K562 (cell line): ENCODE measurements at regions of chr6 and their contacts with region 1.

Region 1: DNA sequence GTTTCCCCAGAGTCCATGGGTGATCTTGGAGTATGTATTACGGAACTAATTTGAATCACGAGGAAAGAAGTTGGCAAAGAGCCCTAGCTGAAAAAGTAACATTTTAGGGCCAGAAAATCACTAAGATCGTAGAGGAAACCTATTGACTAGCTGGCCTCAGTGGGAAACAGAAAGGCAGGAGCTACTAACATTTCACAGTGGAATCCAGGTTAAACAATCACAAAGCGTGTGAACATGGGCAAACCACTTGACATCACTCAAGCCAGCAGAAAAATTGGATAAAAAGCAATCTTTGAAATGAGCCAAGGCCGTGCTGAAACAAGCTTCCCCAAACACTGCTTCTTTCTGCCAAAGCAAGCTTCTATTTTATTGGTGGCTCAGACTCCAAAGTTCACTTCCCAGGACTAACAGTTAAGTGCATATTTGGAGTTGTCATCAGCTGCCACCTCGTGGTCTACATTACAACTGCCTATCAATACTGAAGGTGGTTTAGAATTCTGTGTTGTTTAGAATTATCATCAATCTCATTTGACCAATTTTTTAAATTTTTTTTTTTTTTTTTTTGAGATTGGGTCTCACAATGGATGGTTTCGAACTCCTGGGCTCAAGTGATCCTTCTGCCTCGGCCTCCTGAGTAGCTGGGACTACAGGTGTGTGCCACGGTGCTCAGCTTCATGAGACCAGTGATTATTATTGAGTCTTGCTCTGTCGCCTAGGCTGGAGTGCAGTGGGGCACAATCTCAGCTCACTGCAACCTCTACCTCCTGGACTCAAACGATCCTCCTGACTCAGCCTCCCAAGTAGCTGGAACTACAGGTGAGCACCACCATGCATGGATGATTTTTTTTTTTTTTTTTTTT is 10.6 kb downstream of the RPS10 start:
- DNase-seq: peak; percentile 50 to 82 (median 63)
- ATAC-seq: peak; percentile 85
- H3K4me3 ChIP-seq: no peak overlapping the region
- H3K27ac ChIP-seq: no peak overlapping the region; the same call in 2 of the 3 replicates
- H3K4me1 ChIP-seq: no peaks in the 10 kb centered on the region
- H3K27me3 ChIP-seq: no peaks in the 10 kb centered on the region
- CTCF ChIP-seq: peak; percentile 73 to 89 (median 78)
- EP300 ChIP-seq: no peak
- POLR2A ChIP-seq: no peak
- RAD21 ChIP-seq: peak; percentile 95 to 97

Region 2: DNA sequence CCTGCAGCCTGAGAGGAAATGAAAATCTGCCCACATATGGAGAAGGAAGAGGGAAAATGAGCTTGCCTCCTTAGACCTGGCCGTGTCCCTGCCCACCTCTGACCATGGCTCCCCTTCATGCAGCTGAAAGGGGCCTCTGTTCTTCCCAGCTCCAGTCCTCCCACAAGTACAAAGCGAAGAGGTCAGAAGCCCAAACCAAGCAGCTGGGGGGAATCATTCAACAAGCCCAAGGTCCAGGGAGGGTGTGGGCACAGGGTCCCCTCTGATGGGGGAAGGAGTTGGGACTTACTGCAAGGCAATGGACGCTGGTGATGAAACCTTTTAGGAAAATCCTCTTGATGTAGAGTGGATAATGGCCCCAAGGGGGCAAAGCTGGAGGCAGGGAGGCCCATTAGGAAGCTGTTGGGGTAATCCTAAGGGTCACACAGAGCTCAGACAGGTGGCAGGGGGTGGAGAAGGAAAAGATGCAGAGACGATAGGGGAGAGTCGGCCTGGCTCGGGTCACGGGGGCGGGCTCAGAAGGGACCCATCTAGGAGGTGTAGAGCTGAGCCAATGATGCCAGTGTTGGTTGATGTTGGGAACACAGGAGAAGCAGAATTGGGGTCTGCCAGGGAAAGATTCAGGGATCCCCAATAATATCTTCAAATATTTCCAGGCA is 253.2 kb before region 1 on chr6:
- CTCF ChIA-PET with region 1: interaction called, 4 read pairs
- POLR2A ChIA-PET with region 1: interaction called, 7 read pairs
- in situ Hi-C with region 1: loop called (anchors 5 kb)
- intact Hi-C with region 1: loop called (anchors 2 kb)
- DNase-seq: no peak
- ATAC-seq: no peak
- H3K4me3 ChIP-seq: no peak overlapping the region
- H3K27ac ChIP-seq: no peak overlapping the region
- H3K4me1 ChIP-seq: no peaks in the 10 kb centered on the region
- H3K27me3 ChIP-seq: peaks cover 8 to 20% of the 10 kb centered on the region in 2 experiments; a peak in 3 of 5 replicates
- CTCF ChIP-seq: no peak
- EP300 ChIP-seq: no peak
- POLR2A ChIP-seq: no peak
- RAD21 ChIP-seq: no peak

Region 3: GRCh38 chr6:34169897-34170296 is 245.3 kb before region 1 on chr6:
- CTCF ChIA-PET with region 1: interaction called, 3 read pairs
- POLR2A ChIA-PET with region 1: no interaction called
- in situ Hi-C with region 1: loop called (anchors 5 kb)
- intact Hi-C with region 1: loop called (anchors 2 kb)
- DNase-seq: no peak
- ATAC-seq: no peak
- H3K4me3 ChIP-seq: no peak overlapping the region
- H3K27ac ChIP-seq: no peak overlapping the region
- H3K4me1 ChIP-seq: no peaks in the 10 kb centered on the region
- H3K27me3 ChIP-seq: peaks cover 0 to 3% of the 10 kb centered on the region in 2 experiments; a peak in 1 of 5 replicates
- CTCF ChIP-seq: no peak
- EP300 ChIP-seq: no peak
- POLR2A ChIP-seq: no peak
- RAD21 ChIP-seq: no peak

Region 4: DNA sequence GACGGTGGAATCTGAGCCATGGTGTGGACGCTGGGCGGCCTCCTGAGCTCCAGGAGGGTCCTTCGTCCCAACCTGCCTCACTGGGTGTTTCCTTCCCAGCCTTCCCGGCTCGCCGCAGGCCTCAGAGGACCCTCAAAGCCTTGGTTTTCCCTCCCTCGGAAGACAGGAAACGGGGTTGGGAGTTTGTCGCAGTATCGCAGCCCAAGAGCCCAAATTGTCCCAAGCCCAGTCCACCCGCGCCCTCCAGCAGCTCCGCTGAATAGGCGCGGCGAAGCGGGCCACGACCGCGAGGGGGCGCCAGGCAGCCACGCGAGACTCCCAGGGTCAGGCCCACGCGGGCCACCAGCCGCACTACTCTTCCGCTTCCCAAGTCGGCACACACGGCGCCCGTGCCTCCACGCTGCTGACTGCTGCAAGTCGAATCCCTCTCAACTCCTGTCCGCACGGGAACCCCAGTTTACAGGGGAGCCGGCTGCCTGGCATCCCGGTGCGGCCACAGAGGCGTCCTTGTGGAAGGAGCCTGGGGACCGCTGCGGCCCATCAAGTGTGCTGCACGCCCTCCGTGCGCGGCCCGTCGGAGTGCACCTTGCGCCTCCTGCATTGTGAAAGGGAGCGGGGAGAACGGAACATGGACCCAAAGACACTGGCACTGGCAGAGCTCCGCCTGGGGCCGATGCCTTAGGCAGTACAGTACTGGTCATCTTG is 219.0 kb before region 1 on chr6:
- CTCF ChIA-PET with region 1: interaction called, 23 read pairs
- POLR2A ChIA-PET with region 1: interaction called, 16 read pairs
- in situ Hi-C with region 1: no loop called
- intact Hi-C with region 1: loop called (anchors 2 kb)
- DNase-seq: peak; percentile 94 to 96 (median 95)
- ATAC-seq: peak; percentile 97
- H3K4me3 ChIP-seq: no peak overlapping the region; the same call in 1 of the 2 replicates
- H3K27ac ChIP-seq: peak overlapping the region; percentile 46; the same call in 1 of the 3 replicates
- H3K4me1 ChIP-seq: peaks cover 13 to 22% of the 10 kb centered on the region in 2 experiments; a peak in 4 of 5 replicates
- H3K27me3 ChIP-seq: no peaks in the 10 kb centered on the region
- CTCF ChIP-seq: peak; percentile 94 to 98 (median 96)
- EP300 ChIP-seq: peak; percentile 39; the same call in 1 of the 2 replicates
- POLR2A ChIP-seq: peak; percentile 62
- RAD21 ChIP-seq: peak; percentile 97 to 99

Region 5: DNA sequence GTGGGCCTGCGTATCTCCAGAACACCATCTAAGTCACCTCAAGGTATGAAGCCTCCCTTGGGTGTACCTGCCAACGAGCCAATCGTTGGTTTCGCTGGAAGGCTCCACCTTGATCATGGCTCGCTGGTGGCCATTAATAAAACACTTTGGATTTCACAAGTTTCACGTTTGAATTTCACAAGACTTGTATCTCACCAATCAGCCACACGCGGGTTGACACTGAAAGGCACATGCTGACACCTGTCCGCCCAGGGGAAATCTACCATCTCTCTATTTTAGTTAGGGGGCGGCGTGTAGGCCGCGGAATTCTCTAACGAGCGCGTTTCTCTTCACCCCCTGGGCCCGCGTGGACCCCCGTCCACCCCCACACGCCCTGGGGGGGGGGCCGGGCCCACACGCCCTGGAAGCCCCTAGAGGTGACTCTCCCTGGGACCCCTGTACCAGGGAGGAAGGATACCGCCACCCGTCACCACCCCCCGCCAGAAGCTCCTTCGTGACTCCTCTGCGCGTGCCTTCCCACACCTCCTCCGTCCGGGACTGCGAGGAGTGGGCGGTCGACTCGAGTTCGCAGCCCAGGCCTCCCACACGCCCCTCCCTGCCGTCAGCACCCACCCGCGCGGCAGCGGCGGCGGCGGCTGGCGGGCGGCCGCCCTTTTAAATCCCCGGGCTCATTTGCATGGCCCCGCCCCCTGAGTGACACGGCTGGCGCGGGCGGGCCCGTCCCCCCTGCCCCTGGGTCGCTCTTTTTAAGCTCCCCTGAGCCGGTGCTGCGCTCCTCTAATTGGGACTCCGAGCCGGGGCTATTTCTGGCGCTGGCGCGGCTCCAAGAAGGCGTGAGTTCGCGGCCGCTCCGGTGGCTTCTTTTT is 178.9 kb before region 1 on chr6 and contains the start of gene HMGA1:
- CTCF ChIA-PET with region 1: no interaction called
- POLR2A ChIA-PET with region 1: interaction called, 12 read pairs
- in situ Hi-C with region 1: no loop called
- intact Hi-C with region 1: no loop called
- DNase-seq: peak; percentile 88 to 98 (median 94)
- ATAC-seq: peak; percentile 82
- H3K4me3 ChIP-seq: peak within 1 kb of the TSS; percentile 85
- H3K27ac ChIP-seq: peak within 1 kb of the TSS; percentile 98
- H3K4me1 ChIP-seq: peaks cover 41 to 45% of the 10 kb centered on the region in 2 experiments
- H3K27me3 ChIP-seq: no peaks in the 10 kb centered on the region
- CTCF ChIP-seq: no peak
- EP300 ChIP-seq: no peak; the same call in 1 of the 2 replicates
- POLR2A ChIP-seq: peak; percentile 100
- RAD21 ChIP-seq: peak in 1 of 2 experiments; percentile 19; a peak in 1 of 4 replicates
- polyA plus RNA-seq, gene HMGA1: 27.8 to 58.8 TPM

Region 6: GRCh38 chr6:34392497-34393190 is 22.6 kb before region 1 on chr6 and contains the start of gene NUDT3:
- CTCF ChIA-PET with region 1: interaction called, 5 read pairs
- POLR2A ChIA-PET with region 1: interaction called, 15 read pairs
- in situ Hi-C with region 1: no loop called
- intact Hi-C with region 1: no loop called
- DNase-seq: peak; percentile 96 to 99 (median 96)
- ATAC-seq: peak; percentile 90
- H3K4me3 ChIP-seq: peak within 1 kb of the TSS; percentile 91
- H3K27ac ChIP-seq: peak within 1 kb of the TSS; percentile 96
- H3K4me1 ChIP-seq: peaks cover 17 to 19% of the 10 kb centered on the region in 2 experiments; a peak in 4 of 5 replicates
- H3K27me3 ChIP-seq: no peaks in the 10 kb centered on the region
- CTCF ChIP-seq: peak; percentile 92 to 95 (median 93)
- EP300 ChIP-seq: peak; percentile 50
- POLR2A ChIP-seq: no peak
- RAD21 ChIP-seq: peak; percentile 86 to 89
- polyA plus RNA-seq, gene NUDT3: 5.4 to 57.7 TPM

Region 7: GRCh38 chr6:34425498-34426410 is 10.5 kb after region 1 on chr6 and contains the start of gene RPS10:
- CTCF ChIA-PET with region 1: interaction called, 3 read pairs
- POLR2A ChIA-PET with region 1: interaction called, 65 read pairs
- in situ Hi-C with region 1: no loop called
- intact Hi-C with region 1: no loop called
- DNase-seq: peak; percentile 99 to 100 (median 100)
- ATAC-seq: peak; percentile 94
- H3K4me3 ChIP-seq: peak within 1 kb of the TSS; percentile 65
- H3K27ac ChIP-seq: peak within 1 kb of the TSS; percentile 81
- H3K4me1 ChIP-seq: peaks cover 10 to 20% of the 10 kb centered on the region in 2 experiments; a peak in 4 of 5 replicates
- H3K27me3 ChIP-seq: no peaks in the 10 kb centered on the region
- CTCF ChIP-seq: peak in 2 of 3 experiments; percentile 34 to 37; a peak in 4 of 6 replicates
- EP300 ChIP-seq: no peak
- POLR2A ChIP-seq: peak; percentile 99
- RAD21 ChIP-seq: peak; percentile 11 to 38; a peak in 2 of 4 replicates
- polyA plus RNA-seq, gene RPS10: 2,680 to 3,048 TPM